ENCODE measurements at regions of chr11 and their contacts with region 1.

Region 1: DNA sequence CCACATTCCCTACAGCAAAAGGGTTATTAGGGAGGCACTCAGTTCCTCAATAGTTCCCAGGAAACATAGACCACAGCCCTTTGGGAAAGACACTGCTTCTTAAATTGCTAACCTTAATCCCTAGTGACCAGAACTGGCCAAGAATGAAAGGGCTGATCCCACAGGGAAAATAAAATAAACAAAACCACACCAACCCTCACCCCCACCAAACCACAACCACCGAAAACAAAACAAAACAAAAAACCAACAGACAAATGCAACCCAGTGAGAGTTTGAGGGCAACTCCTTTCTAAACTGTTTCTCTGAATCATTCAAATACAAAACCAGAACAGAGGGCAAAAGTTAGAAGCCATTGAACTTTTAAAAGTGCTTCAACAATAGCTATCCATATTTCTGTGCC is 57.2 kb downstream of the NAV2 start:
- DNase-seq: no peak
- ATAC-seq: no peak
- H3K4me3 Mint-ChIP-seq: no peak overlapping the region
- H3K27ac Mint-ChIP-seq: no peak overlapping the region
- H3K4me1 Mint-ChIP-seq: no peaks in the 10 kb centered on the region
- H3K27me3 Mint-ChIP-seq: peaks cover 29% of the 10 kb centered on the region

Region 2: DNA sequence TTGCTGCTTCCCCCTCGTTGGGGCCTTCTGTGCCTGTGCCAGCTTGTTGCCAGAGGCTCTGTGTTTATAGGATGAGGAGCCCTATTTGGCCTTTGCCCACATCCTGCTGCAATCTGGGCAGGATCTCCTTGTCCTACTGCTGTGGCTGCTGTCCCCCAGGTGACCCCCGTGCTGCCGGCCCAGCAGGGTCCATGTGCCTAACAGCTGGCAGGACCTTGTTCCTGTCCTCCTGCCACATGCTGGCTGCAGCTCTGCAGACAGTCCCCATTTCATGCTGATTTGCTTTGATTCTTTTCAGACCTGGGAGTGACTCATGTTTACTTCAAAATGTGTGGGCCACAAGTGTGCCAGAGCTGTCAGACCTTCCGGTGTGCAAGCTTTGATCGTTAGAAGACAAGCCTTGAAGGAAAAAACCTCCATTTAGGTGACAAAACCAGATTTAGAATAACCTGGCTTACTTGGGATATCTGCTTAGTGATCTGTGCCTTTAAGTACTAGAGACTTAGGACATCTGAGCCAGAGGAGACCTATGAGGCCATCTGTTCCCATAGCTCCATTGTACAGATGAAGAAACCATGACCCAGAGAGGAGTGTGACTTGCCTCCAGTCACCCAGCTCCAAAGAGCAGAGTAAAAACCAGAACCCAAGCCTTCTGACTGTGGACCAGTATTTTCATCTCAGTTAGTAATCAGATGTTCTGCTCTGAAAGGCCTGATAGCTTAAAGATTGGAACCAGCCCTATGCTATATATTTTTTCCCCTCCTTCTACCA is 46.1 kb before region 1 on chr11:
- CTCF ChIA-PET with region 1: no interaction called
- POLR2A ChIA-PET with region 1: interaction called, 11 read pairs
- intact Hi-C with region 1: no loop called
- DNase-seq: peak; percentile 66
- ATAC-seq: peak; percentile 93
- H3K4me3 Mint-ChIP-seq: no peak overlapping the region
- H3K27ac Mint-ChIP-seq: peak overlapping the region; percentile 56
- H3K4me1 Mint-ChIP-seq: peaks cover 21% of the 10 kb centered on the region
- H3K27me3 Mint-ChIP-seq: peaks cover 2% of the 10 kb centered on the region